Activated CD8-positive, alpha-beta T cell treated with anti-CD3 and anti-CD28 coated beads for 36 hours (primary cell): ENCODE measurements at regions of chr19 and their contacts with region 1.

Region 1: DNA sequence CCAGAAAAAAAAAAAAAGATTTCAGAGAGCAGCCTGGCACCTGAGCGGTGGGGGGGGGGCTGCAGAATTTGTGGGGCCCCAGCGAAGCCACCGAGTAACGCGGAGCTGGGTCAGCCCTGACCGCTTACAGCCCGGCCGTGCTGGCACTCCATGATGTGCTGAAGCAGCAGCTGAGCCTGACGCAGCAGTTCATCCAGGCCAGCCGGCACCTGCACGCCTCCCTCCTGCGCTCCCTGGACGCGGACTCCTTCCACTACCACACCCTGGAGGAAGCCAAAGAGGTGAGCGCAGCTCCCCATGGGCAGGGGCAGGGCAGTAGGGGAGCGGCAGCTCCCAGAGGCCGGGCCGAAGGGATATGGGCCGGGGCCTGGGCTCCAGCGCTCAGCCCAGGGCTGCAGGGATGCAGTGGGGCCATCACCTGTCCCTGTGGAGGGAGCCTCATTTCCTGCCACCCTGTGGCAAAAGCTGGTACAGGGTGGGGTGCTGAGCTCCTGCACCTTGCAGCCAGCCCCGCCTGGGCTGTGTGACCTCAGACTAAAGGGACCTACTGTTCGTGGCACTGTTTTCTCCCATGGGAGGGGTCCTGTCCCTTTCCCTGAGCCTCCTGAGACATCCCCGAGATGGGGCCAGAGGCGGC is 18.3 kb downstream of the C19orf44 start:
- DNase-seq: no peak
- ATAC-seq: no peak
- H3K4me3 Mint-ChIP-seq: no peak overlapping the region
- H3K27ac Mint-ChIP-seq: no peak overlapping the region
- H3K4me1 Mint-ChIP-seq: peaks cover 2% of the 10 kb centered on the region
- H3K27me3 Mint-ChIP-seq: no peaks in the 10 kb centered on the region
- CTCF ChIP-seq: no peak

Region 2: GRCh38 chr19:16441661-16442162 is 72.8 kb before region 1 on chr19:
- CTCF ChIA-PET with region 1: interaction called, 17 read pairs
- POLR2A ChIA-PET with region 1: no interaction called
- intact Hi-C with region 1: no loop called
- DNase-seq: peak; percentile 50
- ATAC-seq: peak; percentile 84
- H3K4me3 Mint-ChIP-seq: no peak overlapping the region
- H3K27ac Mint-ChIP-seq: no peak overlapping the region
- H3K4me1 Mint-ChIP-seq: peaks cover 28% of the 10 kb centered on the region
- H3K27me3 Mint-ChIP-seq: no peaks in the 10 kb centered on the region
- CTCF ChIP-seq: peak; percentile 68